ENCODE measurements at regions of chr6 and their contacts with region 1.

Region 1: GRCh38 chr6:40678941-40679340 is 91.8 kb upstream of the LRFN2 start:
- DNase-seq: no peak
- H3K4me3 ChIP-seq: no peak overlapping the region
- H3K27ac ChIP-seq: no peak overlapping the region
- H3K4me1 ChIP-seq: no peaks in the 10 kb centered on the region
- H3K27me3 ChIP-seq: peaks cover 70% of the 10 kb centered on the region
- CTCF ChIP-seq: no peak

Region 2: DNA sequence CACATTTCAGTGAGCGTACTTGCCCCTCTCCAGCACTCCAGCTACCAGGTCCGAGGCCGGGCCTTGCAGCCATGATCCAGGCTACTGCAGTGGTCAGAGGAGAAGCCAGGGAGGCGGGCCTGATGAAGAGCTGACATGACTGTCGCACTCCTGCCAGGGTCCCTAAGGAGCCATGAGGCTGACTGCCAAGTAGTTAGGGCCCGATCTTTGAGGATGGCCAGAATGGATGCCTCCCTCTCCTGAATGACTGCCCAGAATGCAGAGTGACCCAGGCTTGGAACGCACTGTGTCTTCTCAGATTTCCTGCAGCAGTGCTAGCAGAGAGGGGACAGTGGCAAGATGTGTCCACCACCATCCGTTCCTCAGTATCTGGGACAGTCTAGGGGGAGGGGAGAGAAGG is 67.0 kb before region 1 on chr6:
- CTCF ChIA-PET with region 1: no interaction called
- POLR2A ChIA-PET with region 1: no interaction called
- intact Hi-C with region 1: loop called (anchors 2 kb)
- DNase-seq: no peak
- H3K4me3 ChIP-seq: no peak overlapping the region
- H3K27ac ChIP-seq: no peak overlapping the region
- H3K4me1 ChIP-seq: no peaks in the 10 kb centered on the region
- H3K27me3 ChIP-seq: peaks cover 19% of the 10 kb centered on the region
- CTCF ChIP-seq: no peak

Region 3: GRCh38 chr6:40722553-40723258 is 43.8 kb after region 1 on chr6:
- CTCF ChIA-PET with region 1: no interaction called
- POLR2A ChIA-PET with region 1: no interaction called
- intact Hi-C with region 1: no loop called
- DNase-seq: no peak
- H3K4me3 ChIP-seq: no peak overlapping the region
- H3K27ac ChIP-seq: no peak overlapping the region
- H3K4me1 ChIP-seq: no peaks in the 10 kb centered on the region
- H3K27me3 ChIP-seq: peaks cover 51% of the 10 kb centered on the region
- CTCF ChIP-seq: no peak

Region 4: GRCh38 chr6:41182069-41183034 is 503.4 kb after region 1 on chr6:
- CTCF ChIA-PET with region 1: no interaction called
- POLR2A ChIA-PET with region 1: no interaction called
- intact Hi-C with region 1: no loop called
- DNase-seq: peak; percentile 10 to 62
- H3K4me3 ChIP-seq: no peak overlapping the region
- H3K27ac ChIP-seq: no peak overlapping the region
- H3K4me1 ChIP-seq: no peaks in the 10 kb centered on the region
- H3K27me3 ChIP-seq: peaks cover 57% of the 10 kb centered on the region
- CTCF ChIP-seq: peak; percentile 68

Region 5: DNA sequence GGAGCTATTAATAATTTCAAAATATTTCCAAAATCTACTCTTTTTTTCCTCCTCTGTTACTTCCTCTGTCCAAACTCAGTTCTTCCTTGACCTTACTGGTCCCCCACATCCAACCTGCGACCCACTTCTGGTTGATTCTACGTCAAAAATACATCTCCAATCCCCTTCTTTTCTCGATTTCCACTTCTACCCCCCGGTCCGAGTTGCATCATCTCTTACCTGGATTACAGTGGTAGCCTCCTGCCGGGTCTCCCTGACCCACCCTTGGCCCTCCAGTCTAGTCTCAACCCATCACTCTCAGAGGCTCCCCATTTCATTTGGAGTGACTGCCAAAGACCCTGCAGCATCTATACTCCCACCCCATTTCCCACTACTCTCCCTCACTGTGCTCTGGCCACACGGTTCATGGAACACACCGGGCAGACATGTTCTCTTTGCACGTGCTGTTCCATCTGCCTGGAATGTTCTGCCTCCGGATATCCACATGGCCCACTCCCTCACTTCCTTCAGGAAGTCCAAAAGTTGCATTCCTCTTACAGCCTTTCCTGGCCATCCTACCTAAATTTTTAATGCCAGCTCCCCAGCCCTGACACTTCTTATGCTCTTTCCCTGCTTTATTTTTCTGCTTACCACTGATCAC is 1268.8 kb after region 1 on chr6:
- CTCF ChIA-PET with region 1: no interaction called
- POLR2A ChIA-PET with region 1: no interaction called
- intact Hi-C with region 1: no loop called
- DNase-seq: no peak
- H3K4me3 ChIP-seq: no peak overlapping the region
- H3K27ac ChIP-seq: no peak overlapping the region
- H3K4me1 ChIP-seq: peaks cover 8% of the 10 kb centered on the region; the same call in 1 of the 2 replicates
- H3K27me3 ChIP-seq: no peaks in the 10 kb centered on the region
- CTCF ChIP-seq: no peak

Measured in PC-9 (cell line).